ENCODE measurements at regions of chr15 and their contacts with region 1.

Region 1: GRCh38 chr15:47139965-47140364 is 577.3 kb upstream of the SEMA6D start:
- DNase-seq: no peak
- ATAC-seq: no peak
- H3K4me3 ChIP-seq: no peak overlapping the region
- H3K27ac ChIP-seq: no peak overlapping the region
- H3K4me1 ChIP-seq: no peaks in the 10 kb centered on the region
- H3K27me3 ChIP-seq: no peaks in the 10 kb centered on the region
- CTCF ChIP-seq: no peak

Region 2: GRCh38 chr15:46930426-46930825 is 209.5 kb before region 1 on chr15:
- intact Hi-C with region 1: no loop called
- DNase-seq: no peak
- ATAC-seq: no peak
- H3K4me3 ChIP-seq: no peak overlapping the region
- H3K27ac ChIP-seq: no peak overlapping the region
- H3K4me1 ChIP-seq: no peaks in the 10 kb centered on the region
- H3K27me3 ChIP-seq: no peaks in the 10 kb centered on the region
- CTCF ChIP-seq: no peak

Region 3: DNA sequence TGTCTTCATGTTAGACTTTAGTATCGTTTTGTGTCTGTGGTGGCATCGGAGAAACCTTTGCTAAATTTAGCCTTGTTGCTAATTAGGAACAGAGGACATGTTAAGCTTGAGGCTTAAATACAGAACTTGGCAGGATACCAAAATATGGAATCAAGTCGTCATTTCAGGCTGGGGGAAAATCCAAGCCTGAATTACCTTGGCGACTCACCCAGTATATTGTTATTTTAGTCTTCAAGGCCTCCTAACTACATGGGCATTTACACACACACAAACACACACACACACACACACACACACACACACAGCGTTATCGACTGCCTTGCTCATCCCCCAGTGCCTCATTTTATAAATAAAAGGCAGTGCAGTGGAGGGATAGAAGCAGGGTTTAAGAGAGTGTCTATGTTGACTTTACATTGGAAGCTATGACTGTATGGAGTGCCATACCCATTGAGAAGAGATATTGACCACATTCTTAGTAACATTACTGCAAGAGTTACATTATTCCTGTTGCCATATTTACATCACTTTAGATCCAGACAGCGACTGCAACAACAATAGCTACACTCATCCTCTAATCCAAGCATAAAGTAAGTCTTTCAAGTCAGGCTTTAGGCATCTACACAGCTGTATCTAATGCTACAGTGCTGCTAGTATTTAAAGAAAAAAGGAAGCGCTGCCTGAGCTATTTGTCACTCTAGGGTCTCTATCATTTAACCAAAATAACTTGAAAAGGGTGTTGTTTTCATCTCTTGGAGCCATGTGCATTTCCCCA is 366.6 kb after region 1 on chr15:
- intact Hi-C with region 1: loop called in 1 of 2 experiments (anchors 10 kb)
- DNase-seq: no peak
- ATAC-seq: peak in 3 of 4 donors; percentile 48 to 73 (median 61)
- H3K4me3 ChIP-seq: no peak overlapping the region
- H3K27ac ChIP-seq: no peak overlapping the region
- H3K4me1 ChIP-seq: peaks cover 4% of the 10 kb centered on the region
- H3K27me3 ChIP-seq: no peaks in the 10 kb centered on the region
- CTCF ChIP-seq: no peak